ENCODE measurements at regions of chr2 and their contacts with region 1.

Region 1: DNA sequence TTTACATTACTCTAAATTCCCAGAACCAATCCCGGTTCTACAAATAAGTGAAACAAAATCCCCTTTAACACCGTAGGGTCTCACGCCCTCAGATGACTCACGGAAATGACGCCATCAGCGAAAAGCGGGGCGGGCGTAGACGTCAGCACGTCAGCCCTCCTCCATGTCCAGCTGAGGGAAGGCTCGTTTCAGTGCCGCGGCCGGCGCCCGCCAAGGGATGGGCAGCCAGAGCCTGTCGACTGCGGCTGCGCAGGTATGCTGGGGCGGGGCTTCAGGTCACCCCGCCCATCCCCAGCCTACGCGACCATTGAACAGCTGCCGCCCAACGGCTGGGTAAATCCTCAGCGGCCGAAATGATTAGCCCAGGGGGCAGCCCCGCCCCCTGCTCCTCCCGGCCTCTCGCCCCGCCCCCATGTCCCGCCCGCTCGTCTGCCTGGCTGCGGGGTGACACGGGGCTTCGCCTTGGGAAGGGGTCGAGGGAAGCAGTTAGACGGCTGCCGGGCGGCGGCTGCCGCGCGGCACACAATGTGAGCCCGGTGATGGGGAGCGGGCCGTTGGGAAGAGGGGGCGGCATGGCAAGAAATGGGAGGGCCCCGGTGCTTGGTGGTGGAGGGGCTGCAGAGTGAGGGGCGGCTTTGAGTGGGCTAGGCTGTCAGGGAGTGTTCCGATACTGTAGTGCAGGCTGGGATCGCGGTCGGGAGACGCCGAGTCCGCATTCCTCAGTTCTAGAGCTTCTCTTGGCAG is at the start of gene NBEAL1:
- DNase-seq: peak; percentile 97 to 98
- H3K4me3 ChIP-seq: peak within 1 kb of the TSS; percentile 35 to 96 (median 90)
- H3K27ac ChIP-seq: peak within 1 kb of the TSS; percentile 92 to 95 (median 94)
- H3K4me1 ChIP-seq: peaks cover 11 to 30% of the 10 kb centered on the region in 2 donors
- H3K27me3 ChIP-seq: no peaks in the 10 kb centered on the region
- CTCF ChIP-seq: no peak
- POLR2A ChIP-seq: peak in 1 of 2 donors; percentile 85
- total RNA-seq, gene NBEAL1: 58.8 to 88.8 (median 71.3) TPM

Region 2: GRCh38 chr2:202375609-202376408 is 638.8 kb before region 1 on chr2 and contains the start of gene BMPR2:
- intact Hi-C with region 1: loop called (anchors 10 kb)
- DNase-seq: peak; percentile 89 to 92
- H3K4me3 ChIP-seq: peak within 1 kb of the TSS; percentile 25 to 91 (median 74)
- H3K27ac ChIP-seq: peak within 1 kb of the TSS; percentile 93 to 98 (median 97)
- H3K4me1 ChIP-seq: peaks cover 14 to 17% of the 10 kb centered on the region in 2 donors
- H3K27me3 ChIP-seq: no peaks in the 10 kb centered on the region
- CTCF ChIP-seq: no peak
- POLR2A ChIP-seq: peak; percentile 66 to 92
- total RNA-seq, gene BMPR2: 50.1 to 67.0 (median 56.3) TPM

Region 3: DNA sequence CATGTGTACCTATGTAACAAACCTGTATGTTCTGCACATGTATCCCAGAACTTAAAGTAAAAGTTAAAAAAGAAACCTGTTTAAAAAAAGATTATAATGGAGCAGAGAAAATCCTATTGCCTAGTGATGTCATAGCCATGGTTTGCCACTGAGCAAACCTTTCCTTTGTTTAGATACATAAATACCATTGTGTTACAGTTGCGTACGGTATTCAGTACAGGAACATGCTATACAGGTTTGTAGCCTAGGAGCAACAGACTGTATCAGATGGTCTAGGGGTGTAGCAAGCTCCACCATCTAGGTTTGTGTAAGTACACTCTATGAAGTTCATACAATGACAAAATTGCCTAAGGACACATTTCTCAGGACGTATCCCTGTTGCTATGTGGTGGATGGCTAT is 156.1 kb before region 1 on chr2:
- intact Hi-C with region 1: no loop called
- DNase-seq: no peak
- H3K4me3 ChIP-seq: no peak overlapping the region
- H3K27ac ChIP-seq: no peak overlapping the region
- H3K4me1 ChIP-seq: no peaks in the 10 kb centered on the region
- H3K27me3 ChIP-seq: no peaks in the 10 kb centered on the region
- CTCF ChIP-seq: no peak
- POLR2A ChIP-seq: no peak

Measured in thyroid gland (tissue), 4 donors.